ENCODE measurements at regions of chr12 and their contacts with region 1.

Region 1: GRCh38 chr12:32659908-32660440 is 19.1 kb upstream of the DNM1L start:
- H3K4me3 ChIP-seq: no peak overlapping the region
- H3K27ac ChIP-seq: peak overlapping the region; percentile 53
- H3K4me1 ChIP-seq: peaks cover 9% of the 10 kb centered on the region
- CTCF ChIP-seq: no peak

Region 2: GRCh38 chr12:32365473-32366064 is 294.4 kb before region 1 on chr12:
- CTCF ChIA-PET with region 1: interaction called, 21 read pairs
- POLR2A ChIA-PET with region 1: no interaction called
- H3K4me3 ChIP-seq: no peak overlapping the region
- H3K27ac ChIP-seq: no peak overlapping the region
- H3K4me1 ChIP-seq: no peaks in the 10 kb centered on the region
- CTCF ChIP-seq: peak; percentile 55; the same call in 1 of the 2 replicates

Region 3: DNA sequence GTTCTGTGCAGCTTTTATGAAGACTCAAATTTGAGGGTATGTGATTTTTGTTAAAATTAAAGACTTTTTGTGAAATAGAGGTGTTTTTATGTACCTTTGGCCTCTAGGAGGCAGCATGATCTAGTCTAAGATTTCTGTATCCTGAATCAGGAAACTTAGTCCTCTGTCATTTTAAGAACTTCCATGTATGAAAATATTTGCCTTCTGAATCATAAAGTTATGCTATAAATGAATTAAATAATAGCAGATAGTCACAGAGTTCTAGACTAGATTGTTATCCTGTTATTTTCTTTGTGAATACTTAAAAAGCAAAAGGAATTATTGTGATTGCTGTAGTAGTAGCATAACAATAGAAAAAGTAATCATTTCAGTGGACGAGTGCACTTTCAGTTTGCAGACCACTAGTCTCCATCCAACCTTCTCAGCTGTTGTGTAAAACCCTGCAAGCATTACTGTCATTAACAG is 204.3 kb before region 1 on chr12:
- CTCF ChIA-PET with region 1: interaction called, 28 read pairs
- POLR2A ChIA-PET with region 1: no interaction called
- H3K4me3 ChIP-seq: peak overlapping the region; percentile 17
- H3K27ac ChIP-seq: no peak overlapping the region
- H3K4me1 ChIP-seq: no peaks in the 10 kb centered on the region
- CTCF ChIP-seq: peak; percentile 17; the same call in 1 of the 2 replicates

Region 4: DNA sequence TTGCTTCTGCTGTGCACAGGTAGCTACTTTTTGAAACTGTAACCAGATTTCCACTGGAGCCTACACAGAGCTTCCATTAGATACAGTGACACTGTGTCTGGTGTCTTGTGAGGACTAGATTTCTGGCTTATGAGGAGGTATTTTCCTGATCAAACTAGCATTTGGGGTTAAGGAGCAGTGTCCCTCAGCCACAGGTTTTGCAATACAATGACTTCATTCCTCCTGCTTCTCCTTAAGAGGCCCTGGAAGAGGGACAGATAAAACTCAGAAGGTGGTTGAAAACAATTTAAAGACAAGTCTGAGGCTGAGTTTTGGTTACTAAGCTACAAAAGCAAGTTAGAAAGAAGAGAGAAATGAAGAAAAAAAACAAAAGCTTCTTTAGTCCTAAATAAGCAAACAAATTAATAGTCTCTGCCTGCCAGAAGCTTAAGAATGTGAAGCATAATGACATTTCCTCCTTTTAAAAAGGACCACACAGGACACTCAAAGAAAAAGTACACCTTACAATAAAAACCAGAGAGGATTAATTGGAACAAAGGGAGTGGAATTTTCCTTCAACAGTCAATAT is 183.6 kb after region 1 on chr12:
- CTCF ChIA-PET with region 1: no interaction called
- POLR2A ChIA-PET with region 1: no interaction called
- H3K4me3 ChIP-seq: no peak overlapping the region
- H3K27ac ChIP-seq: no peak overlapping the region
- H3K4me1 ChIP-seq: no peaks in the 10 kb centered on the region
- CTCF ChIP-seq: no peak

Region 5: GRCh38 chr12:32983968-32984367 is 324.0 kb after region 1 on chr12:
- CTCF ChIA-PET with region 1: no interaction called
- POLR2A ChIA-PET with region 1: no interaction called
- H3K4me3 ChIP-seq: no peak overlapping the region
- H3K27ac ChIP-seq: no peak overlapping the region
- H3K4me1 ChIP-seq: peaks cover 10% of the 10 kb centered on the region; the same call in 1 of the 2 replicates
- CTCF ChIP-seq: no peak

Region 6: GRCh38 chr12:33116284-33116683 is 456.3 kb after region 1 on chr12:
- CTCF ChIA-PET with region 1: no interaction called
- POLR2A ChIA-PET with region 1: no interaction called
- H3K4me3 ChIP-seq: no peak overlapping the region
- H3K27ac ChIP-seq: no peak overlapping the region
- H3K4me1 ChIP-seq: no peaks in the 10 kb centered on the region
- CTCF ChIP-seq: no peak